ENCODE measurements at regions of chr4 and their contacts with region 1.

Region 1: GRCh38 chr4:155433636-155434360 is 57.0 kb upstream of the MAP9 start:
- DNase-seq: no peak
- H3K4me3 ChIP-seq: no peak overlapping the region
- H3K27ac ChIP-seq: no peak overlapping the region
- H3K4me1 ChIP-seq: peaks cover 0 to 17% (median 6%) of the 10 kb centered on the region in 4 donors
- H3K27me3 ChIP-seq: no peaks in the 10 kb centered on the region
- CTCF ChIP-seq: no peak

Region 2: DNA sequence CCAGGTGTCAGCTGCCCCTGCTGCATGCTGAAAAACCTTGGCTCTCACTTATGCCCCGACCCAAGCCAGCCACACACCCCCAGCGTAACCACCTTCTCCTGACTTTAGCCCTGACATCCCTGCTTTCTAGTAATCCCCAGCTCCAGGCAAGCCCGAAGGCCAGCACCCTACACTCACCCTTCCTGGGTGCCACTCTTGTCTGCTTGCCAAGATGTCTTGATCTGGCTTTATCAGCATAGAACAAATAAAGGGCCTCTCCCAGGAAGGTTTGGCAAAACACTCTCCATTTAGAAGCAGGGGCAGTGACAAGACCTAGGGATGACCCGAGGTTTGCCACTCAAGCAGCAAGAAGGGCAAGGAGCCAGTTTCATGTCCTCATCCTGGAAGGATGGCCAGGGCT is 50.3 kb before region 1 on chr4:
- intact Hi-C with region 1: no loop called
- DNase-seq: no peak
- H3K4me3 ChIP-seq: no peak overlapping the region
- H3K27ac ChIP-seq: no peak overlapping the region
- H3K4me1 ChIP-seq: no peaks in the 10 kb centered on the region
- H3K27me3 ChIP-seq: no peaks in the 10 kb centered on the region
- CTCF ChIP-seq: no peak

Region 3: DNA sequence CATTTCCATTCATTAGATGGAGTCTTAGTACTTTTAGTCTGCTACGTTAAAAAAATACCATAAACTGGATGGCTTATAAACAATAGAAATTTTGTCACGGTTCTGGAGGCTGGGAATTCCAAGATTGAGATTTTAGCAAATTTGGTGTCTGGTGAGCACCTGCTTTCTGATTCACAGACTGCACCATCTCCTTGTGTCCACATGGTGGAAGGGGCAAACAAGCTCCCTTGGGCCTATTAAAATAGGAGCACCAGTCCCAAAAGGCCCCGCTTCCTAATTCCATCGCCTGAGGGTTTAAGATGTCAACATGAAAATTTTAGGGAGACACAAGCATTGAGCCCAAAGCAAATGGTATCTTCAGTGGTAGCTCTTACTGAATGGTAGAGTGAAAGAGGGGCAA is 63.5 kb after region 1 on chr4:
- intact Hi-C with region 1: loop called (anchors 2 kb)
- DNase-seq: no peak
- H3K4me3 ChIP-seq: no peak overlapping the region
- H3K27ac ChIP-seq: no peak overlapping the region
- H3K4me1 ChIP-seq: peaks cover 0 to 9% (median 0%) of the 10 kb centered on the region in 4 donors
- H3K27me3 ChIP-seq: no peaks in the 10 kb centered on the region
- CTCF ChIP-seq: no peak